ENCODE measurements at regions of chr18 and their contacts with region 1.

Region 1: DNA sequence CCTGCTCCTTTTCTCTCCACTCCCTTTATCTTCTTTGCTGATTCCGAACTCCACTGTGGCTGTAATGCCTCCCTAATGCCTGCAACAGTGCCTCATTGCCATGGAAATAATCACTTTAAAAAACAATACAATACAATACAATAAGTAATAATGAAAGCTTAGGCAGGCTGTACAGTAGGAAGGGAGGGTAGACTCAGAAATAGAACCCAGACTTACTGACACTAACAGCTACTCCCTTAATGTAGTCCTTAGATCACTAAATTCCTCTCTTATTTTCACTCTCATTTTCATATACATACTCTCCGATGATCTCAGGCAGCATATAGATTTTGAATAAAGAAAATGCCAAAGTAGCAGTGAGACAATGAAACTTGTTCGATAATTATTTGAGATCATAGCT is 70.2 kb downstream of the DLGAP1 start:
- DNase-seq: no peak
- ATAC-seq: peak; percentile 88
- H3K4me3 ChIP-seq: no peak overlapping the region
- H3K27ac ChIP-seq: no peak overlapping the region
- H3K4me1 ChIP-seq: no peaks in the 10 kb centered on the region
- H3K27me3 ChIP-seq: no peaks in the 10 kb centered on the region
- CTCF ChIP-seq: no peak
- EP300 ChIP-seq: peak; percentile 40; a peak in 2 of 4 replicates
- POLR2A ChIP-seq: no peak
- RAD21 ChIP-seq: no peak

Region 2: DNA sequence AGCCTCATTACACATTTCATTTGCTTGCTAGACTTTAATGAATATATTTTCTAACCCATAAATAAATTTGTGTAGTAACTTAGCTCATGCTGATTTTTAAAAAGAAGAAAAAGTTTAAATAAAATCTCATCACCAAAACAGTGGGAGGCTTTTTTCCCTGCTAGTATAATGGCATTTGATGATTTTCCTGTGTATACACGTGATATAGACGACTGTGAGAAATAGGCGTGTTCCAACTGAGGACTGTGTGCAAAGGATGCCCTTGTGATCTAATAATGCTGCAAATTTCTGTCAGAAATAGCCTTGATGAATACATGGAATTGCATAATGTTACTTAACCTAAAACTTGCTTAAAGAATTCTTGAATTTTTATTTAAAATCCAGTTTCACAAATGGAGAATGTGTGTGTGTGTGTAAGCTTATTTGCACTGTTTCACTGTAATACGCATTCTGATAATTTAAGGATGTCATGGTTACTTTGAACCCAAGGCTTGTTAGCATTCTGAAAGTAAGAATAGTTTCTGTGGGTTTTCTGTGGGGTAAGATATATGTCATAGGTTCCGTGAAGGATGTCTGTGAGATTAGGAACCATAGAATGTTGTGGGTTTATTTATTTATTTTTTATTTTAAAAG is 107.9 kb before region 1 on chr18:
- CTCF ChIA-PET with region 1: interaction called, 3 read pairs
- POLR2A ChIA-PET with region 1: interaction called, 4 read pairs
- RAD21 ChIA-PET with region 1: interaction called, 4 read pairs
- SMC1A ChIA-PET with region 1: interaction called, 18 read pairs
- in situ Hi-C with region 1: no loop called
- intact Hi-C with region 1: loop called (anchors 5 kb)
- DNase-seq: no peak
- ATAC-seq: peak; percentile 85
- H3K4me3 ChIP-seq: no peak overlapping the region
- H3K27ac ChIP-seq: no peak overlapping the region
- H3K4me1 ChIP-seq: no peaks in the 10 kb centered on the region
- H3K27me3 ChIP-seq: no peaks in the 10 kb centered on the region
- CTCF ChIP-seq: no peak
- EP300 ChIP-seq: peak; percentile 90 to 94; a peak in 3 of 4 replicates
- POLR2A ChIP-seq: no peak
- RAD21 ChIP-seq: no peak

Region 3: DNA sequence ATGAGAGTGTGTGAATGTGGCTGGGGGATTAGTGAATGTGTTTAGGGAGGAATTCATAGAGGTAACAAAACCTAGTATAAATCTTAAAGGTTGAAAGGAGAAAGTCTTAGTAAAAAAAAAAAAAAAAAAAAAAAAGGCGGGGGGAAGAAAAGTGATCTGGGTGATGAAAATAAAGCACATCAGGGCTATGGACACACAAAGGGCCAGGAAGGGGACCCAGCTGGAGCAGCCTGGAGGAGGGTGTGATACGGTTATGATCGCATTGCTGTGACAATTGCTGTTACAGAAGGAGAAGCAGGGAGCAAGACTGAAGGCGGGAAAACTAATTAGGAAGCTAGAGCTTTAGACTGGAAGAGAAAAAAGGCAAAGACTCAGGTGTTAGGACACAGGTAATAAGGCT is 15.2 kb before region 1 on chr18:
- CTCF ChIA-PET with region 1: no interaction called
- POLR2A ChIA-PET with region 1: interaction called, 10 read pairs
- RAD21 ChIA-PET with region 1: interaction called, 13 read pairs
- SMC1A ChIA-PET with region 1: interaction called, 22 read pairs
- in situ Hi-C with region 1: no loop called
- intact Hi-C with region 1: no loop called
- DNase-seq: no peak
- ATAC-seq: no peak
- H3K4me3 ChIP-seq: no peak overlapping the region
- H3K27ac ChIP-seq: no peak overlapping the region
- H3K4me1 ChIP-seq: no peaks in the 10 kb centered on the region
- H3K27me3 ChIP-seq: no peaks in the 10 kb centered on the region
- CTCF ChIP-seq: no peak
- EP300 ChIP-seq: no peak
- POLR2A ChIP-seq: no peak
- RAD21 ChIP-seq: no peak

Region 4: DNA sequence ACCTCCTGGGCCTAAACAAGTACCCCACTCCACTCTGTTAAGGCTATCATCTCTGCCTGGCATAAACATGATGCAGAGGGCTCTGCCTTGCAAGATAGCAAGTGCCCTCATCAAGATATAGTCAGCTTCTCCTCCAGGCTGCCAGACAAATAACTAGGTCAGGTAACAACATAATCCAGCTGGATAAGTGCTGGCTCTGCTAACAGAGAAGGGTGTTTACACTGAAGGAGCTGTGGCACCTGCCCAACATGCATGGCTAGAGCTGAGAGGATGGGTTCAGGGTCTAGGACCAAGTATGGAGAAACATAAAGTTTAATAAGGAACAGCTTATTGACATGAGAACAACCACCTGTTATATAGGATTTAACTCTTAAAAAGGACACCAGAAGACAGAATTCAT is 27.4 kb after region 1 on chr18:
- CTCF ChIA-PET with region 1: interaction called, 3 read pairs
- POLR2A ChIA-PET with region 1: no interaction called
- RAD21 ChIA-PET with region 1: interaction called, 3 read pairs
- SMC1A ChIA-PET with region 1: interaction called, 12 read pairs
- in situ Hi-C with region 1: no loop called
- intact Hi-C with region 1: no loop called
- DNase-seq: no peak
- ATAC-seq: peak; percentile 21
- H3K4me3 ChIP-seq: no peak overlapping the region
- H3K27ac ChIP-seq: no peak overlapping the region
- H3K4me1 ChIP-seq: no peaks in the 10 kb centered on the region
- H3K27me3 ChIP-seq: no peaks in the 10 kb centered on the region
- CTCF ChIP-seq: no peak
- EP300 ChIP-seq: no peak
- POLR2A ChIP-seq: no peak
- RAD21 ChIP-seq: no peak

Region 5: DNA sequence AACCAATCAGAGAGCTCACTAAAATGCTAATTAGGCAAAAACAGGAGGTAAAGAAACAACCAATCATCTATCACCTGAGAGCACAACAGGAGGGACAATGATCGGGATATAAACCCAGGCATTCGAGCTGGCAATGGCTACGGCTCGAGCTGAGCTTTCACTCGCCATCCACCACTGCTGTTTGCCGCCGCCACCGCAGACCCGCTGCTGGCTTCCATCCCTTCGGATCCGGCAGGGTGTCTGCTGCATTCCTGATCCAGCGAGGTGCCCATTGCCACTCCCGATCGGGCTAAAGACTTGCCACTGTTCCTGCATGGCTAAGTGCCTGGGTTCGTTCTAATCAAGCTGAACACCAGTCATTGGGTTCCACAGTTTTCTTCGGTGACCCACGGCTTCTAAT is 306.9 kb after region 1 on chr18:
- CTCF ChIA-PET with region 1: no interaction called
- POLR2A ChIA-PET with region 1: no interaction called
- RAD21 ChIA-PET with region 1: no interaction called
- SMC1A ChIA-PET with region 1: no interaction called
- in situ Hi-C with region 1: no loop called
- intact Hi-C with region 1: no loop called
- DNase-seq: no peak
- ATAC-seq: no peak
- H3K4me3 ChIP-seq: no peak overlapping the region
- H3K27ac ChIP-seq: no peak overlapping the region
- H3K4me1 ChIP-seq: no peaks in the 10 kb centered on the region
- H3K27me3 ChIP-seq: no peaks in the 10 kb centered on the region
- CTCF ChIP-seq: no peak
- EP300 ChIP-seq: no peak
- POLR2A ChIP-seq: no peak
- RAD21 ChIP-seq: no peak

Measured in GM12878 (cell line).